ENCODE measurements at regions of chr12 and their contacts with region 1.

Region 1: GRCh38 chr12:3034067-3034750 is 43.0 kb upstream of the TSPAN9 start:
- H3K4me3 ChIP-seq: no peak overlapping the region
- H3K27ac ChIP-seq: no peak overlapping the region
- H3K4me1 ChIP-seq: no peaks in the 10 kb centered on the region
- CTCF ChIP-seq: peak; percentile 78

Region 2: DNA sequence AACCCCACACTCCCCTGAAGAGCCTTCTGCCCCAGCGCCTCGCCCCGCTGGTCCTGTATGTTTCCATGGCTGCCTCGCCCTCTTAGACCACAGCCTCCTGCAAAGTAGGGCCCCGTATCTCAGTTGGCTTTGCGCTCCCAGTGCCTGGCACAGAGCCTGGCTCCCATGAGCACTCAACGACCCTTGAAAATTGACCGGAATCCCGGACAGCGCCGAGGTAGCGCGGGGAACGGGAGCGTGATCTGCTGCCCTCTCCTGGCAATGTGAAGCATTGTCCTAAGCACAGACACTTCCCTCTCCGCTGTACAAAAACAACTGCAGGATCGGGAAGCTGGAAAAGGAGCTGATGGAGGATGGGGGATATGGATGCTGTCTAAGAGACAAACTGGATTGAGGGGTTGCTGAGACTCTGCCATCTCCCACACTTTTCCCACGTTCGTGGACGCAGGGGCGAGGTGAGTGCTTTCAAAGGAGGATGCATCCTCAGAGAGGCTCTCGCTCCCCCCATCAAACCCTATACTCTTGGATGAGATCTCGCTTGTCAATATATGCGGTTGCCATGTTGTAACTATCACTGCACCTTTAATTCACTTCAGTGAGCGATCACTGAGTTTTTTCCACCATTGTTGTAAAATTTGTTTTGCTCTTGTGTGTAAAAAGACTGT is 250.1 kb before region 1 on chr12:
- CTCF ChIA-PET with region 1: no interaction called
- POLR2A ChIA-PET with region 1: no interaction called
- H3K4me3 ChIP-seq: no peak overlapping the region
- H3K27ac ChIP-seq: no peak overlapping the region
- H3K4me1 ChIP-seq: peaks cover 11% of the 10 kb centered on the region
- CTCF ChIP-seq: peak; percentile 87

Region 3: DNA sequence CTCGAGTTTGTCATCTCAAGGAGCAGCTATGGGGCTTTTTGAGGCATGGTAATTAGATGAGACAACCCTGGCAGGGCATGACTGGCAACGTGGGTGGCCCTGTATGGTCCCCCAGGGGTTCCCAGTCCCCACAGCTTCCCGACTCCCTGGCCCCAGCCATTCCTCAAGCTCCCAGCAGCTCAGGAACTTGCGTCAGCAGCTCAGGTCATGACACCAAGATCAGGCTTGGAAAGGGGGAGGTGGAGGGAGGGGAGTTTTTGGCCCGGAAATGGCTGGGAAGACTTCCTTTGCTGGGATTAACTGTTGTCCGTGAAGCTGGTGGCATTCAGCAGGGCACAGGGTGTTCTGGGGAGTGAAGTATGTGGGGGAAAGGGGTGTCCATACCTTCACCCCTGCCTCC is 188.9 kb before region 1 on chr12:
- CTCF ChIA-PET with region 1: interaction called, 10 read pairs
- POLR2A ChIA-PET with region 1: no interaction called
- H3K4me3 ChIP-seq: no peak overlapping the region
- H3K27ac ChIP-seq: no peak overlapping the region
- H3K4me1 ChIP-seq: no peaks in the 10 kb centered on the region
- CTCF ChIP-seq: no peak

Region 4: GRCh38 chr12:2884810-2885209 is 149.4 kb before region 1 on chr12:
- CTCF ChIA-PET with region 1: interaction called, 34 read pairs
- POLR2A ChIA-PET with region 1: interaction called, 4 read pairs
- H3K4me3 ChIP-seq: no peak overlapping the region
- H3K27ac ChIP-seq: no peak overlapping the region
- H3K4me1 ChIP-seq: no peaks in the 10 kb centered on the region
- CTCF ChIP-seq: no peak

Measured in HEK293 (cell line).